Caco-2 (cell line): ENCODE measurements at regions of chr19 and their contacts with region 1.

Region 1: GRCh38 chr19:572140-572742 is at the start of gene BSG:
- DNase-seq: peak; percentile 97
- H3K4me3 ChIP-seq: peak within 1 kb of the TSS; percentile 65
- H3K4me3 Mint-ChIP-seq: peak within 1 kb of the TSS; percentile 98
- H3K27ac Mint-ChIP-seq: peak within 1 kb of the TSS; percentile 100
- H3K4me1 ChIP-seq: peaks cover 19% of the 10 kb centered on the region
- H3K4me1 Mint-ChIP-seq: peaks cover 13% of the 10 kb centered on the region
- H3K27me3 ChIP-seq: no peaks in the 10 kb centered on the region
- H3K27me3 Mint-ChIP-seq: no peaks in the 10 kb centered on the region
- CTCF ChIP-seq: no peak
- total RNA-seq, gene BSG: 618 and 656 TPM in 2 replicates

Region 2: GRCh38 chr19:531009-531752 is 41.1 kb before region 1 on chr19:
- CTCF ChIA-PET with region 1: no interaction called
- POLR2A ChIA-PET with region 1: interaction called, 4 read pairs
- intact Hi-C with region 1: loop called (anchors 5 kb)
- DNase-seq: peak; percentile 91 to 95
- H3K4me3 ChIP-seq: peak overlapping the region; percentile 94
- H3K4me3 Mint-ChIP-seq: peak overlapping the region; percentile 82
- H3K27ac Mint-ChIP-seq: peak overlapping the region; percentile 72
- H3K4me1 ChIP-seq: peaks cover 30% of the 10 kb centered on the region
- H3K4me1 Mint-ChIP-seq: peaks cover 6% of the 10 kb centered on the region
- H3K27me3 ChIP-seq: no peaks in the 10 kb centered on the region
- H3K27me3 Mint-ChIP-seq: no peaks in the 10 kb centered on the region
- CTCF ChIP-seq: peak in 1 of 2 experiments; percentile 6

Region 3: DNA sequence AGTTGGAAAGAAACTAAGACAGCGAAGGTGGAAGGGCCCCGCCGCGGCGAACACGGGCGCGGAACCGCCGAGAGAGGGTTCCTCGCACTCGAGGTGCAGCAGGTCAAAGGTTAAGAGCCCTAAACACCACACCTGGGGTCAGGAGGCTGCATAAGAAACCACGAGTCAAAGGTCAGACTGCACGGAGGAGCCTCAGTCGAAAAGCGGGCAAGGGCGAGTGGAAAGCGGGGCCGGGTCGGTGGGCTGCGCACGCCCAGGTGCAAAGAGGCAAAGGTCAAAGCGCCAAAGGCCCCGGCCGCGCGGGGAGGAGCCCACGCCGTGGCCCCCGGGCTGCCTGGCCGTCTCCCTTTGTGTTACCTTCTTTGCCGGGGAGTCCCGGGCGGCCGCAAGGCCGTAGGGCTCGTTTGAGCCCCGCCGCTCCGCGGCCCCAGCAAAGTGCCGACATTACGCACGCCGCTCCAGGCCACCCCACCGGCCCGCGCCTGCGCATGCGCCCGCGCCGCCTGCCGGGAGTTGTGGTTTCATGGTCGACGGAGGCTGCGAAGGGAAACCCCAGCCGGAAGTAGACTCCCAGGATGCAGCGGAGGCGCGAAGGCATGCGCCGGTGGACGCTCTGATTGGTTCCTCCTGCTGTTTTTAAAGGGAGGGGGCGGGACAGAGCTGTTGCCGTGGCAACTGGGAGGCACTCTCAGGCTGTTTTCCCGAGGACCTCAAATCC is 61.0 kb after region 1 on chr19 and contains the start of gene POLRMT:
- CTCF ChIA-PET with region 1: no interaction called
- POLR2A ChIA-PET with region 1: no interaction called
- intact Hi-C with region 1: loop called (anchors 2 kb)
- DNase-seq: peak; percentile 97 to 98
- H3K4me3 ChIP-seq: peak within 1 kb of the TSS; percentile 67
- H3K4me3 Mint-ChIP-seq: peak within 1 kb of the TSS; percentile 100
- H3K27ac Mint-ChIP-seq: peak within 1 kb of the TSS; percentile 96
- H3K4me1 ChIP-seq: peaks cover 5% of the 10 kb centered on the region; the same call in 1 of the 2 replicates
- H3K4me1 Mint-ChIP-seq: peaks cover 6% of the 10 kb centered on the region
- H3K27me3 ChIP-seq: no peaks in the 10 kb centered on the region
- H3K27me3 Mint-ChIP-seq: no peaks in the 10 kb centered on the region
- CTCF ChIP-seq: no peak
- total RNA-seq, gene POLRMT: 93.3 and 95.8 TPM in 2 replicates